ENCODE measurements at regions of chrX and their contacts with region 1.

Region 1: GRCh38 chrX:46642145-46642544 is 68.6 kb downstream of the CHST7 start:
- DNase-seq: no peak
- H3K4me3 ChIP-seq: no peak overlapping the region
- H3K27me3 ChIP-seq: no peaks in the 10 kb centered on the region
- CTCF ChIP-seq: peak; percentile 40; the same call in 1 of the 2 replicates

Region 2: GRCh38 chrX:46408553-46409407 is 233.4 kb before region 1 on chrX:
- CTCF ChIA-PET with region 1: no interaction called
- POLR2A ChIA-PET with region 1: no interaction called
- DNase-seq: no peak
- H3K4me3 ChIP-seq: no peak overlapping the region
- H3K27me3 ChIP-seq: no peaks in the 10 kb centered on the region
- CTCF ChIP-seq: peak; percentile 66

Region 3: GRCh38 chrX:46559062-46559461 is 83.1 kb before region 1 on chrX:
- CTCF ChIA-PET with region 1: interaction called, 15 read pairs
- POLR2A ChIA-PET with region 1: no interaction called
- DNase-seq: no peak
- H3K4me3 ChIP-seq: no peak overlapping the region
- H3K27me3 ChIP-seq: no peaks in the 10 kb centered on the region
- CTCF ChIP-seq: no peak

Region 4: GRCh38 chrX:47125102-47125501 is 483.0 kb after region 1 on chrX:
- CTCF ChIA-PET with region 1: no interaction called
- POLR2A ChIA-PET with region 1: interaction called, 14 read pairs
- DNase-seq: no peak
- H3K4me3 ChIP-seq: no peak overlapping the region
- H3K27me3 ChIP-seq: no peaks in the 10 kb centered on the region
- CTCF ChIP-seq: no peak

Measured in BJ (cell line).